ENCODE measurements at regions of chr14 and their contacts with region 1.

Region 1: DNA sequence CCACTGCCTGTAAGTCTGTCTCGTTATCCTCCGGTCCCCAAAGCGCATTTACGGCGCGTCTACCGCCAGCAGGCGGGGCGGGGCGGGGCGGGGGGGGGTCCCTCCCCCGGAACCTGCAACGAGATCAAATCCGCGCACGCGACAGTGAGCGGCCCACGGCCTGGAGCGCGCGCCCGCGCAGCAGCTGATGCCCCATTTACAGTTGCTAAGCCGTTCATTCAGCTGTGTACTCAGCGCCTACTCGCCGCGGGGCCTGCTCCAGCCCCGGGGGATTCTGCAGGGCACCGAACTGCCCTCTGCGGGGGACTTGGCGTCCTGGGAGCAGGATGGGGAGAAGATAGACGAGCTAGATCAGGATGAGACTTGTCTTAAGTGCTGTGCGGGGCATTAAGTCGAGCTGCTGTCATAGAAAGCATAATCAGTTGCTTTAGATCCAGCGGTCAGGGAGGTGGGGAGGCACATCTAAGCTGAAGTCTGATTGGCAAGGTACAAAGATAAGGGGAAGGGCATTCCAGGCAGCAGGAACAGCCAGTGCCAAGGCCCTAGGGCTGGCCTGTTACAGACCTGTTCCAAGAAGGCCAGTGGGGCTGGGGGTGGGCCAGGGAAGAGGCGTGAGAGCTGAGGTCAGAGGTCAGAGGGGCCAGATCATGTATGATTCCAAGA is 1.4 kb upstream of the CCDC85C start:
- DNase-seq: peak; percentile 71
- H3K4me3 ChIP-seq: peak overlapping the region; percentile 89
- H3K27ac ChIP-seq: peak overlapping the region; percentile 86
- H3K4me1 ChIP-seq: no peaks in the 10 kb centered on the region
- H3K27me3 ChIP-seq: no peaks in the 10 kb centered on the region
- CTCF ChIP-seq: no peak

Region 2: DNA sequence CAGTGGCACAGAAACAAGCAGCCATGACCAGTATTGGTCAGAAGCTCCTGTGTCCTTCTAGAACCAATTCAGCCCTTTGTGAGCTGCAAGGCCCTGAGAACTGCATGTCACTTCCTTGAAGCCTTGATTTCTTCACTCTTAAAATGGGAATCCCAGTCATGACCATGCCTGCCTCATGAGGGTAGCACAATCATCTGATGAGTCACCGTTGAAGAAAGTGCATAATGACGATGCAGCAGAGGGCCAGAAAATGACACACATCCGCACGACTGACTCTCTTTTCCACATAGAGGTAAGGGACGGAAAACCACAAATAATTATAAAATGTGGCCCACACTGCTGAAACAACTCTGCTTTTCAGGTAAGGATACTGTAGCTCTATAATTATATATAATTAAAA is 1110.8 kb before region 1 on chr14:
- intact Hi-C with region 1: no loop called
- DNase-seq: no peak
- H3K4me3 ChIP-seq: no peak overlapping the region
- H3K27ac ChIP-seq: no peak overlapping the region
- H3K4me1 ChIP-seq: no peaks in the 10 kb centered on the region
- H3K27me3 ChIP-seq: no peaks in the 10 kb centered on the region
- CTCF ChIP-seq: no peak

Region 3: DNA sequence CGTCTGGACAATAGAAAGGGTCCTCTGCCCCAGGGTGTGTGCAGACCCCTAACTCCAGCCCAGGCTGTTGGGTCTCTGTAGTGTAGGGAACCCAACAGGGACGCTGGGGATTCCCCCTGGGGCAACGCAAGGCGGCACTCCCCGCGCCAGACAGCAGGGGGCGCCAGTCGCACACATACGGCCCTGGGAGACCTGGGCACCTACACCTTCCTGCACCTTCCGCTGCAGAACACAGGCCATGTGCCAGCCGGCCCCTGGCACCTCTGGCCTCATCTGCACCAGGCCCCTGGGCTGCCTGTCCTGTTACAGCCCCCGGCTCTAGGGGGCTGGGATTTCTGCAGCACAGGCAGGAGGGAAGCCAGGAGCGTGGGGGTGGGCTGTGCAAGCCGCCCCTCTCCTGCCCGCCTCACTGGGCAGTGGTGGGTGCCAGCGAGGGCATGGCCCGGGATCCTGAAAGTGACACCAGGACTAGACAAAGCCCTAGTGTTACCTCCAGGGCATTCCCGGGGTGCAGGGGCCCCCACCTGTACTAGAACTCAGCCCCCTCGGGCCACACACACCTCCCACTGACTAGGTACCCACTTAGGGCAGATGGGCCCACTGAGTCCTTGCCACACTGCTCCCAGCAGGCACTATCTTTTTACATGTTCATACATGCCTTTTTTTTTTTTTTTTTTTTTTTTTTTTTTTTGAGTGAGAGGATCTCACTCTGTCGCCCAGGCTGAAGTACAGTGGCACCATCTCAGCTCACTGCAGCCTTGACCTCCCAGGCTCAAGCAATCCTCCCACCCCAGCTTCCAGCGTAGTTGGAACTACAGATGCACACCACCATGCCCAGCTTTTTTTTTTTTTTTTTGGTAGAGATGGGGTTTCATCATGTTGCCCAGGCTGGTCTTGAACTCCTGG is 86.7 kb before region 1 on chr14:
- intact Hi-C with region 1: no loop called
- DNase-seq: peak; percentile 86
- H3K4me3 ChIP-seq: no peak overlapping the region
- H3K27ac ChIP-seq: no peak overlapping the region
- H3K4me1 ChIP-seq: peaks cover 6% of the 10 kb centered on the region
- H3K27me3 ChIP-seq: no peaks in the 10 kb centered on the region
- CTCF ChIP-seq: peak; percentile 96

Region 4: GRCh38 chr14:99563233-99564129 is 41.9 kb before region 1 on chr14:
- intact Hi-C with region 1: loop called (anchors 5 kb)
- DNase-seq: peak; percentile 79
- H3K4me3 ChIP-seq: no peak overlapping the region
- H3K27ac ChIP-seq: no peak overlapping the region
- H3K4me1 ChIP-seq: peaks cover 29% of the 10 kb centered on the region
- H3K27me3 ChIP-seq: no peaks in the 10 kb centered on the region
- CTCF ChIP-seq: no peak

Measured in colonic mucosa (tissue), 4 donors.